Activated CD4-positive, alpha-beta memory T cell treated with anti-CD3 and anti-CD28 coated beads for 36 hours (primary cell): ENCODE measurements at regions of chr12 and their contacts with region 1.

Region 1: DNA sequence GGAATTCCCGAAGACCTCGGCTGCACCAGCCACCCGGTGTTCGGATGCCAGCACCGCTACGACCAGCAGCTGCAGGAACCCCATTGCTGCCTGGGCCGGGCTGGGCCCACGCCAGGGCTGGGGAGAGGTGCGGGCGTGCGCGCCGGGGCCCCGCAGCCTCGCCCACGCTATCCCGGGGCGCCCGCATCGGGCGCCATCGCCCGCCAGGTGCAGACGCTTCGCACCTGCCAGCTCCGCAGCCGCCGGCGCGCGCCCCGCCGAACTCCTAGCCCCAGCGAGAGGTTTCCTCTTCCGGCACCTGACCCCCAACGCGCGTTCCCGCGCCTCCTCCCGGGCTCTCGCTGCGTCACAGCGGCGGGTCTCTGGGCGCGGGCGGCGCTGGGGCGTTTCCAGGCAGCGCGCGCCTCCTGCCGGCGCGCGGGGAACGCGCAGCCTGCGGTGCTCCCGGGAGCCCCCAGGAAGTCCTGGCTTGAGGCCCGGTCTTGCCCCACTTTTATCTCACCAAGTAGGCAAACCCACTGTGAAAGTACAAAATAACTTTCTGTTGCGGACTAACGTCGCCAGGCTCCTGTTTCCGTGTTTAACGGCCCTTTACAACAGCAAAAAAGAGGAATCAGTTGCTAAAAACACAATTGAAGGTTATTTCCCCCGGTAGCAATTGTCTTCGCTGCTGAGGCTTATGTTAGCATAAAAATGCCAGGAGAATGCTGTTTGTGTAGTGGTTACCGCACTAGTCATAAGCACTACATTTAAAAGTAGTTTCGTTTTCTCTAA is at the start of gene TM7SF3:
- DNase-seq: peak; percentile 96
- H3K4me3 Mint-ChIP-seq: peak within 1 kb of the TSS; percentile 85
- H3K27ac Mint-ChIP-seq: peak within 1 kb of the TSS; percentile 89
- H3K4me1 Mint-ChIP-seq: peaks cover 46% of the 10 kb centered on the region
- H3K27me3 Mint-ChIP-seq: no peaks in the 10 kb centered on the region
- total RNA-seq, gene TM7SF3: 24.2 to 28.5 TPM

Region 2: DNA sequence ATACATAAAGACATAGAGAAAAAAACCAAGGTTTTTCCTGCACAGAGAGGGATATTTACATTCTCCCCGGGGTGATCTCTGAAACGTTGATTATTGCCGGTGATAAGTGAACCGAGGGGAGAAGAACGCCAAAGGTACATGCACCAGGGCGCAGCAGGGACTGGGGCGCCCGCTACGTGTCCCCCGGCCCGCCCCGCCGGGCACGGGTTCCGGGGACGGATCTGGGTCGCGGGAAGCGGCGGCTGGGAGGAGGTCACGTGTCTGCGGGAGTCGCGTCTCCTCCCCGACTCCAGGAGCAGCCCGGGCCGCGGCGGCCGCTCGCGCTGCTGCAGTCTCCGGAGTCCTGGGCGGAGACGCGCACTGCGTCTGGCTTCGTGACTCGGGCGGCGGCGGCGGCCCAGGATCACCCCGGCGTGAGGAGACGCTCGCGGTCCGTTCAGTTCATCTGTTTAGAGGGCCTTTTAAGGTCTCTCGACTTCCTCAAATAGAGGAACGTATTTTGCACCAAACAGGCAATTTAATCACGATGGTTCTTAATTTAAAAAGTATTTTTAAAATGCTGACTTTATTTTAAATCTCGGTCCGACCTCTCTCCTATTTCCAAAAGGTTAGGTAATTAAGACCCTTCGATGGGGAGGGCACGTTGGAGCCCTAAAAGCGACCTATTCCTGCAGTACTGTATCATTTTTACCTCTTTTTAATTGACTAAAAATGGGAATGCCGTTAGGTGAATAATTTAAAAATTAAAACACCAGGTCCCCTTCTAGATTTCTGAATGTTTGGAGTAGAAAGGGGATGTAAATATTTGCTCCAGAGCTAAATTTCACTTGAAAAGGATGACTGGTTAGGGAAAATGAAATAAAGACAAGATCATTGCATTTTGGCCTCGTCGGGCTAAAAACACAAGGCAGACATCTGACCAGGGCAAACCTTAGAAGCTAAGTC is 887.7 kb before region 1 on chr12:
- CTCF ChIA-PET with region 1: no interaction called
- POLR2A ChIA-PET with region 1: no interaction called
- intact Hi-C with region 1: loop called (anchors 2 kb)
- DNase-seq: peak; percentile 45
- H3K4me3 Mint-ChIP-seq: peak overlapping the region; percentile 79
- H3K27ac Mint-ChIP-seq: no peak overlapping the region
- H3K4me1 Mint-ChIP-seq: peaks cover 30% of the 10 kb centered on the region
- H3K27me3 Mint-ChIP-seq: peaks cover 72% of the 10 kb centered on the region

Region 3: DNA sequence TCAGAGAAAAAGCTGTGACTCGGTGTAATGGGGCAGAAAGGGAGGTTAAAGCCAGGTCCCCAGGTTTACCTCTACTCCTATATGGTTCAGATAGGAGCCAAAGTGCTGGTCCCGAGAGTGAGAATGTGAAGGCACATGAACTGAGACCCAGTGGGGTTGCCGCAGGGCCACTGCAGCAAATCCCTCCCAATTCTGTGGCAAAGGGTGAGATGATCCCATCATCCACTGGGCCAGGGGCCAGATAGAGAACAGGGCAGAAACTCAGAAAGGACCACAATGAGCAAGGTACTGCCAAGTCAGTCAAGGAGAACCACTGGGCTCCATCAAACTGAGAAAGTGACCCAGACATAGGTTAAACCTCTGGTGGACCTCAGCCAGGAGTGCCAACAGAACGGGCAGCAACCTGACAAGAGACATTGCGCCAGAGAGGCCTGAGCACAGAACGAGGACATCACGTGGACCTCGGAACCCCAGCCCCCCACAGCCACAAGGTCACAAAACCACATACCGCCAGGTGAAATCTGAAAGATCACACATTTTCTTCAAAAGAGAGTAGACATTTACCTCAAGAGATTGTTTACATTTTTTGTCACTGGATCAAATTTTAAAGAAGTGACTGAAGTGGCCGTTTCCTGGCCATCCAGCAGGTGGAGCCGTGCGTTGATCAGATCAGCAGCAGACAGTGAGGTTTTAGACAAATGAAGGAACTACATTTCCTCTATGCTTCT is 160.8 kb before region 1 on chr12:
- CTCF ChIA-PET with region 1: interaction called, 4 read pairs
- POLR2A ChIA-PET with region 1: interaction called, 3 read pairs
- intact Hi-C with region 1: loop called (anchors 1 kb)
- DNase-seq: peak; percentile 82
- H3K4me3 Mint-ChIP-seq: no peak overlapping the region
- H3K27ac Mint-ChIP-seq: no peak overlapping the region
- H3K4me1 Mint-ChIP-seq: no peaks in the 10 kb centered on the region
- H3K27me3 Mint-ChIP-seq: peaks cover 4% of the 10 kb centered on the region

Region 4: DNA sequence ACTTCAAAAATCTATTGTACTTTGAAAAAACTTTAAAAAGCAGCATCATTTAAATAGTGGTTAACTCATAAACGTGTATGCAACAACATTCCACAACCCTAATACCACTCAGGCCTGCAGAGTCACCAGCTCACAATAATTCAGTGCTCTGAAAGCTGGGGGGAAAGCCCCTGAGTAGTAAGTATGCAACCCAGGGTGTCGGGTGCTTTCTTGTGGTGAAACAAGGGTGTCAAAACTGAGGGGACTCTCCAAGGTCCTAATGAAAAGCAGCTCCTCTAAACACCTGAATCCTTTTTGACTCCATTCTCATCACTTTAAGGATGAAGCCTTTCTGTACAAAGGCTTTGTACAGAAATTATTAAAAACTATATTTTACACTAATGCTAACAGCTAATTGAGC is 42.3 kb before region 1 on chr12:
- CTCF ChIA-PET with region 1: interaction called, 4 read pairs
- POLR2A ChIA-PET with region 1: no interaction called
- intact Hi-C with region 1: loop called (anchors 1 kb)
- DNase-seq: peak; percentile 85
- H3K4me3 Mint-ChIP-seq: no peak overlapping the region
- H3K27ac Mint-ChIP-seq: no peak overlapping the region
- H3K4me1 Mint-ChIP-seq: peaks cover 24% of the 10 kb centered on the region
- H3K27me3 Mint-ChIP-seq: no peaks in the 10 kb centered on the region

Region 5: GRCh38 chr12:27243804-27244683 is 229.8 kb after region 1 on chr12 and contains the start of gene STK38L:
- CTCF ChIA-PET with region 1: interaction called, 3 read pairs
- POLR2A ChIA-PET with region 1: interaction called, 3 read pairs
- intact Hi-C with region 1: loop called (anchors 2 kb)
- DNase-seq: peak; percentile 98
- H3K4me3 Mint-ChIP-seq: peak within 1 kb of the TSS; percentile 100
- H3K27ac Mint-ChIP-seq: peak within 1 kb of the TSS; percentile 91
- H3K4me1 Mint-ChIP-seq: peaks cover 45% of the 10 kb centered on the region
- H3K27me3 Mint-ChIP-seq: no peaks in the 10 kb centered on the region
- total RNA-seq, gene STK38L: 25.1 to 25.2 TPM

Region 6: DNA sequence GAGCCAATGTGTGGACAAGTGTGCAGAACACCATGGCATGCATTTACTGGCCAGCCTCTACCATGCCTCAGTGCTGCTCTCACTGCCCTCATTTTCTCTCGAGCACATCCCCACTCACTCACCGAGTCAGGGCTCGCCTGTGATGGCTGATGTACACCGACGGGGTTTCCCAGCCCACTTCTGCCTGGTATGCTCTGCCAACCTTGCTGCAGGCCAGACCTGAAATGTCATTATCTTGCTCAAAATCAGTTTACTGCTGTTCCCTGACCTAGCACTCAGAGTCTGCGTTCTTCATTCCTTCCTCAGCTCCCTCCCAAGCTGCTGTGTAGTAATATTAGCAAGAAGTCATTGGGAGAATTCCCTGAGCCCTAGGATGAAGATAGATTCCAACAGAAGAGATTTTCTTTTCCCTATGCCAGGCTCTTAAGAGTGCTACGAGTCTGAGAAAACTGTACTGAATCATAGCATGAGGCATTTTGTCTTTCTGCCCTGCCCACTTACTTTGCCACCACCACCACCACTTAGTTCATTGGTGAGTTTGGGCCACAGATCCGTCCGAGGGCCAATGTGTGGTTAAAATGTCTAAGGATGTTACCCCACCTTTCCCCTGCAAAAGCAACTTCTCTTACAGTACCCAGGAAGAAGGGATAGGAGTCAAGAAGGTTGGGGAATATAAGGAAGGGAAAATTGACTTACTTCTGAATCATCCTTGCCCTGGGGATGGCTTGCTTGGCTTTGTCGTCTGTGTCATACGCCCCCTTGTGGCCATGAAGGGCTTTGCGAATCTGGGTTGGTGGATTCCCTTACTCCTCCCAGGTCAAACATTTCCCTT is 369.4 kb after region 1 on chr12:
- CTCF ChIA-PET with region 1: interaction called, 4 read pairs
- POLR2A ChIA-PET with region 1: no interaction called
- intact Hi-C with region 1: loop called (anchors 1 kb)
- DNase-seq: peak; percentile 78
- H3K4me3 Mint-ChIP-seq: no peak overlapping the region
- H3K27ac Mint-ChIP-seq: no peak overlapping the region
- H3K4me1 Mint-ChIP-seq: no peaks in the 10 kb centered on the region
- H3K27me3 Mint-ChIP-seq: no peaks in the 10 kb centered on the region